ENCODE measurements at regions of chr1 and their contacts with region 1.

Region 1: GRCh38 chr1:1273512-1274298 is at the start of gene UBE2J2:
- DNase-seq: peak; percentile 77
- ATAC-seq: peak; percentile 85
- H3K4me3 ChIP-seq: peak within 1 kb of the TSS; percentile 76 to 89 (median 82)
- H3K27ac ChIP-seq: peak within 1 kb of the TSS; percentile 64
- H3K4me1 ChIP-seq: peaks cover 54% of the 10 kb centered on the region
- H3K27me3 ChIP-seq: no peaks in the 10 kb centered on the region; a peak in 1 of 5 replicates
- CTCF ChIP-seq: peak; percentile 32; the same call in 1 of the 2 replicates
- EP300 ChIP-seq: 0 out of 4 replicates have a peak, but pooled peaks of 1 of the 2 experiments have one; percentile 17
- POLR2A ChIP-seq: peak in 1 of 2 experiments; percentile 47; a peak in 2 of 4 replicates
- RAD21 ChIP-seq: peak; percentile 39; the same call in 1 of the 2 replicates
- total RNA-seq, gene UBE2J2: 22.1 and 29.4 TPM in 2 replicates

Region 2: DNA sequence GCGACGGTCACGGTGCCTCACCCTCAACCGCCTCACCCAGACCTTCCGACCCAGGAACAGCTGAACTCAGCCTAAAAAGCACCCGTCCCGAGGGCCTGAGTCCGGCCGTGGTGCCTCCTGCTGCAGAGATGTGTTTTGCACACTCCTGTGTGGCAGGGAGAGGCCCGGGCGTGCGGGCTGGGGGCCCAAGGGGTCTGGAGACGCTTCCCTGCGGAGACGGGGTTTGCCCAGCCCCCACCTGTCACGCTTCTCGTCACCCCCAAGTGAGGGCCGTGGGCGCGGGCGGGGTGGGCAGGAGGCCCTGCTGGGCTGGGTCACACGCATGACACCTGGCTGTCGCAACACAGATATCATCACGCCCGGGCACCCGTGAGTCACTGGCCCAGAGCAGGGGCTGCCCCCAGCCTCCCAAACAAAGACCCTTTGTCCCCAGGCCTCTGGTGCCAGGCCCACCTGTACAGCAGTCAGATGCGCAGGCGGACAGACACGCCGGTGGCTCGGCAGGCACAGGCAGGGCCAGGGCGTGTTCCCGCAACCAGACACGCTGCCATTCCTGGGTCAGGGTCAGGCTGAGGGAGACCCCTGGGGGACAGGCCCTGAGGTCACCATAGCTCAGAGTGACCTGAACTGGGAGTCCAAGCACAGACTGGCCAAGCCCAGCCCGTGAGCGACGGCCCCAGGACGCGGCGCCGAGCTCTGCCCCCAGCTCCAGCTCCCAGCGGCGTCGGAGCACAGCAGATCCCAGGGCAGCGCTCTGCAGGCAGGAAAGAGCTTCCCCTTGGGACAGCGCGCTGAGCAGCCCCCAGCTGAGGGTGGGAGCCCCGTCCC is 35.6 kb before region 1 on chr1:
- CTCF ChIA-PET with region 1: no interaction called
- POLR2A ChIA-PET with region 1: interaction called, 11 read pairs
- in situ Hi-C with region 1: no loop called
- intact Hi-C with region 1: no loop called
- DNase-seq: peak; percentile 84
- ATAC-seq: peak; percentile 58
- H3K4me3 ChIP-seq: peak overlapping the region; percentile 39 to 80 (median 47)
- H3K27ac ChIP-seq: peak overlapping the region; percentile 48
- H3K4me1 ChIP-seq: peaks cover 80% of the 10 kb centered on the region
- H3K27me3 ChIP-seq: no peaks in the 10 kb centered on the region; a peak in 1 of 5 replicates
- CTCF ChIP-seq: peak; percentile 45; the same call in 1 of the 2 replicates
- EP300 ChIP-seq: peak in 1 of 2 experiments; percentile 38; a peak in 1 of 4 replicates
- POLR2A ChIP-seq: peak in 1 of 2 experiments; percentile 50; a peak in 1 of 4 replicates
- RAD21 ChIP-seq: no peak

Region 3: DNA sequence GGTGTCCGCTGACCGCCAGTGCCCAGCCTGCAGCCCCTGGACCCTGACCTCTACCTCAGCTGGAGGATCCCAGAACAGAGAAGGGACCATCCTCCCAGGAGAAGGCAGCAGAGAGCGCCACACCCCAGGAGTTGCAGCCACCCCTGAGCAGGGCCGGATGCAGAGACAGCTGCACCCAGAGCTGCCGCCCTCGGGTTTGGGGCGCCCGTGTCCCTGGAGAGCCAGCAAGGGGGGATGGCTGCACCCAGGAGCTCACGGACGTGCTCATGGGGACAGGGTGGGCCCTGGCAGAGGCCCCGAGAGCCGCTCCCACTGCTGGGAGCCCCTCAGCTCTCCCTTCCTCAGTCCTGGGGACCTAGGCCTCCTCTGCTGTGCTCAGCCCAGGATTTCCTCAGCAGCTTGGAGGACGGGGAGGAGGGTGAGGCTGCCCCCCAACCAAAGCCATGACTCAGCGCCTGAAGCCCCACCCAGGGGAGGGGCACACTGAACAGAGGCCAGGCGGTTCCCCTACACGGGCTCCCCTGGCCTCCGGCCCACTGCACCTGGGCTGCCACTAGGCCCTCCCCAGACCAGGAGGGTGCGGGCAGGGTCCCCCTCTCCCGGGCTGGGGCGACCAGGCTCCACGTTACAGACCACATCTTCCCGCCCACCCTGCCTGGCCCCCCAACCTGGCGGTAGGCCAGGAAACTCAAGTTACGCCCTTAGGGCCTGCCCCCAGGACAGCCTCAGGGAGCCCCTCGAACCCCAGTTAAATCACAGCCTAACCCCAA is 31.8 kb after region 1 on chr1:
- CTCF ChIA-PET with region 1: no interaction called
- POLR2A ChIA-PET with region 1: interaction called, 11 read pairs
- in situ Hi-C with region 1: no loop called
- intact Hi-C with region 1: no loop called
- DNase-seq: peak; percentile 74
- ATAC-seq: peak; percentile 45
- H3K4me3 ChIP-seq: peak overlapping the region; percentile 77 to 93 (median 91)
- H3K27ac ChIP-seq: peak overlapping the region; percentile 79
- H3K4me1 ChIP-seq: peaks cover 41% of the 10 kb centered on the region
- H3K27me3 ChIP-seq: no peaks in the 10 kb centered on the region
- CTCF ChIP-seq: peak; percentile 66
- EP300 ChIP-seq: peak in 1 of 2 experiments; percentile 20; a peak in 1 of 4 replicates
- POLR2A ChIP-seq: 0 out of 4 replicates have a peak, but pooled peaks of 1 of the 2 experiments have one; percentile 30
- RAD21 ChIP-seq: no peak

Region 4: GRCh38 chr1:1462318-1462966 is 188.7 kb after region 1 on chr1:
- CTCF ChIA-PET with region 1: no interaction called
- POLR2A ChIA-PET with region 1: no interaction called
- in situ Hi-C with region 1: no loop called
- intact Hi-C with region 1: no loop called
- DNase-seq: peak; percentile 51
- ATAC-seq: peak; percentile 87
- H3K4me3 ChIP-seq: peak overlapping the region; percentile 33 to 71 (median 49); a peak in 5 of 6 replicates
- H3K27ac ChIP-seq: no peak overlapping the region
- H3K4me1 ChIP-seq: peaks cover 37% of the 10 kb centered on the region
- H3K27me3 ChIP-seq: peaks cover 6 to 16% of the 10 kb centered on the region in 2 experiments; a peak in 4 of 5 replicates
- CTCF ChIP-seq: no peak
- EP300 ChIP-seq: no peak
- POLR2A ChIP-seq: peak in 1 of 2 experiments; percentile 40; a peak in 1 of 4 replicates
- RAD21 ChIP-seq: no peak

Measured in HepG2 (cell line).